PC-9 (cell line): ENCODE measurements at regions of chr1 and their contacts with region 1.

Region 1: DNA sequence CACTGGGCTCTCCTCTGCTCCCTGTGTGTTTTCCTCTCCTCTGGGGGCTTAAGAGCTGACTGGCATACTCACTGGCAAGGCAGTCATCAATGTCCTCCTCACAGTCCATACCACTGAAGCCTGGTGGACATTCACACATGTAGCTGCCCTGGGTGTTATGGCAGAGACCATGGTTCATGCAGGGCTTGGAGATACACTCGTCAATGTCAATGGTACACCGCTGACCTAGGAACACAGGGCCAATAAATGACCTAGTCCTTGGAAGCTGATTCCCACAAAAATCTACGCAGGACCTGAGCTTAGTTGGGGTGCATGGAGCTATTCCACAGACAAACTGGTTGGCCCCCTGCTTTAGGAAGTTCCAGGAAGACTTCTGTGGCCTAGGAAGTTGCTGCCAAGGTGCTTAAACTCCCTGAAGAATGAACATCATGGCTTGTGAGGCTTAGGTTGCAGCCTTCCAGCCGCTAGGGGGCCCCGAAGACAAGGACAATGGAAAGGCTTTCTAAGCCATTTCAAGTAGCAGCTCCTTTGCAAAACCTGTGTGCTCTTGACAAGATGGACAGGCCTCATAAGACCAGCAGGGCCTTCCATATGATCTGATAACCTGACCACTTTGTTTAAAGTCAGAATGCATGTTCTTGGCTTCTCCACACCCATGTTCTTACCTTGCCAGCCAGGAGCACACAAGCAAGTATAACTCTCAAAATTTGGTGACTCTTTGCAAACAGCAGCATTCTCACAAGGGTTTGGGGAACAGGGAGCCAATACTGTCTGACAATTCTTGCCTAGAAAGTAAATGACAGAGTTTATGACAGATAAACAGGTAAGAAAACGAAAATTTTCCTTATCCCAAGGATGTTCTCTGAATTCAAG is 52.3 kb upstream of the ADAM30 start:
- DNase-seq: peak; percentile 70 to 74
- H3K4me3 ChIP-seq: no peak overlapping the region
- H3K27ac ChIP-seq: no peak overlapping the region
- H3K4me1 ChIP-seq: no peaks in the 10 kb centered on the region
- H3K27me3 ChIP-seq: no peaks in the 10 kb centered on the region
- CTCF ChIP-seq: peak; percentile 98

Region 2: GRCh38 chr1:119743781-119744597 is 204.6 kb before region 1 on chr1:
- CTCF ChIA-PET with region 1: no interaction called
- POLR2A ChIA-PET with region 1: no interaction called
- intact Hi-C with region 1: loop called (anchors 10 kb)
- DNase-seq: peak; percentile 55 to 58
- H3K4me3 ChIP-seq: no peak overlapping the region
- H3K27ac ChIP-seq: no peak overlapping the region
- H3K4me1 ChIP-seq: no peaks in the 10 kb centered on the region
- H3K27me3 ChIP-seq: no peaks in the 10 kb centered on the region
- CTCF ChIP-seq: peak; percentile 99

Region 3: DNA sequence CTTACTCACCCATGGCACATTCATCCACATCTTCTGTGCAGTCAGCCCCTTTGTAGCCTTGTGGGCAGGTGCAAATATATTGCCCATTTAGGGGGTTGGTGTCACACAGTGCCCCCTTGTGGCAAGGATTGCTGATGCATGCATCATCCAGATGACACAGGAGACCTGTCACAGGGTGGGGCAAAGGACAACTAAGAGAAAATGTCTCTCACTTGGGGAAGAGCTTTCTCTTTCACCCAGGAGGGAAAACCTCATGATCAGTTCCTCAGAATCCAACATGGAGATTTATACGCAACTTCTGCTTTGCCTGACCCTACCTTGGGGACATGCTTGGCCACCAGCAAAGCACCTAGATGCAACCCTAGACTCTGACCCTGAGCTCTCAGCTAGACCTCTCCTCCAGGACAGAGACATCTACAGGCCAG is 19.5 kb after region 1 on chr1:
- CTCF ChIA-PET with region 1: no interaction called
- POLR2A ChIA-PET with region 1: no interaction called
- intact Hi-C with region 1: loop called (anchors 2 kb)
- DNase-seq: peak; percentile 59 to 61
- H3K4me3 ChIP-seq: no peak overlapping the region
- H3K27ac ChIP-seq: peak overlapping the region; percentile 31; the same call in 1 of the 2 replicates
- H3K4me1 ChIP-seq: peaks cover 14% of the 10 kb centered on the region
- H3K27me3 ChIP-seq: no peaks in the 10 kb centered on the region
- CTCF ChIP-seq: peak; percentile 95